ENCODE measurements at regions of chr11 and their contacts with region 1.

Region 1: DNA sequence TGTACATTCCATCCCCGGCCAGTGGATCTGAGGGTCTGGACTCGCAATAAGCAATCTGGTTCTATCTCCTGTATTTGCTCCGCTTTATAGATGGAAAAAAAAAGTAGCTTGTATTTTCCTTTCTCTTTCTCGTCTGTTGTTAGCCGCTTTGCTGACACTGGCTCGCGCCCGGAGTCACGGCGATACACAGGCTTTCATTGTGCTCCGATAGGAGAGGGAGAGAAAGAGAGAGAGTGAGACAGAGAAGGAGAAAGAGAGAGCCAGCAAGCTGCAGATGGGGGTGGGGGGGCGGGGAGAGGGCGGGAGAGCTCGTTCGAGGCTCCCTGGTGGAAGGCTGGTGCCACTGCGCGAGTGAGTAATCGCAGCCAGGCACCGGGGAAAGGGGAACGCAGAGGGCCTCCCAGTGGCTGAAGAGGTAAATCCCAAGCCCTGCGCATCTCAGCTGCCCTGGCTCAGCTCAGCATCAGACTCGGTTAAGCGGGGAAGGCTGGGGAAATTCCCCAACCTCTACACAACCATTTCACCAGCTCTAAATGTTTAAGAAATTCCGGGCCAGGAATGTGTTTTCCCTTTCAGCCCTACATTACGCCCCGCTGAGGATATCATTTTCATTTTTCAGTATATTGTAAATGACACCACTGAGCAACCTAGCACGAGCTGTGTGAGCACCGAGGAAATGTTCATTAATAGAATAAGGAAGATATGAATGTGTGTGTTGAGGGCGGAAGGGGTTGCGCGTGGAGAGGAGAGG is at the start of gene MAML2:
- DNase-seq: peak; percentile 97
- H3K4me3 ChIP-seq: peak within 1 kb of the TSS; percentile 52 to 68 (median 62)
- H3K27ac ChIP-seq: peak within 1 kb of the TSS; percentile 80 to 90 (median 82)
- H3K4me1 ChIP-seq: peaks cover 0 to 46% (median 43%) of the 10 kb centered on the region in 4 donors
- H3K27me3 ChIP-seq: no peaks in the 10 kb centered on the region
- CTCF ChIP-seq: peak; percentile 78 to 98 (median 84)
- EP300 ChIP-seq: no peak
- POLR2A ChIP-seq: no peak
- total RNA-seq, gene MAML2: 11.8 to 20.7 (median 17.9) TPM

Region 2: GRCh38 chr11:95835768-95836488 is 507.2 kb before region 1 on chr11:
- intact Hi-C with region 1: loop called (anchors 10 kb)
- DNase-seq: peak; percentile 80
- H3K4me3 ChIP-seq: no peak overlapping the region
- H3K27ac ChIP-seq: peak overlapping the region in 2 of 4 donors; percentile 33 to 35
- H3K4me1 ChIP-seq: peaks cover 0 to 8% (median 0%) of the 10 kb centered on the region in 4 donors
- H3K27me3 ChIP-seq: no peaks in the 10 kb centered on the region
- CTCF ChIP-seq: peak; percentile 62 to 81 (median 79)
- EP300 ChIP-seq: no peak
- POLR2A ChIP-seq: no peak

Region 3: GRCh38 chr11:95923728-95924413 is 419.3 kb before region 1 on chr11 and contains the start of gene MTMR2:
- intact Hi-C with region 1: loop called (anchors 5 kb)
- DNase-seq: peak; percentile 87
- H3K4me3 ChIP-seq: peak within 1 kb of the TSS; percentile 65 to 78 (median 70)
- H3K27ac ChIP-seq: peak within 1 kb of the TSS; percentile 89 to 96 (median 91)
- H3K4me1 ChIP-seq: peaks cover 0 to 24% (median 16%) of the 10 kb centered on the region in 4 donors
- H3K27me3 ChIP-seq: no peaks in the 10 kb centered on the region
- CTCF ChIP-seq: no peak
- EP300 ChIP-seq: no peak
- POLR2A ChIP-seq: peak; percentile 64 to 72
- total RNA-seq, gene MTMR2: 17.6 to 33.7 (median 24.0) TPM

Region 4: GRCh38 chr11:96054870-96055705 is 288.0 kb before region 1 on chr11:
- intact Hi-C with region 1: loop called (anchors 1 kb)
- DNase-seq: no peak
- H3K4me3 ChIP-seq: no peak overlapping the region
- H3K27ac ChIP-seq: peak overlapping the region in 1 of 4 donors; percentile 10
- H3K4me1 ChIP-seq: peaks cover 0 to 32% (median 17%) of the 10 kb centered on the region in 4 donors
- H3K27me3 ChIP-seq: no peaks in the 10 kb centered on the region
- CTCF ChIP-seq: peak; percentile 30 to 61 (median 54)
- EP300 ChIP-seq: no peak
- POLR2A ChIP-seq: no peak

Region 5: DNA sequence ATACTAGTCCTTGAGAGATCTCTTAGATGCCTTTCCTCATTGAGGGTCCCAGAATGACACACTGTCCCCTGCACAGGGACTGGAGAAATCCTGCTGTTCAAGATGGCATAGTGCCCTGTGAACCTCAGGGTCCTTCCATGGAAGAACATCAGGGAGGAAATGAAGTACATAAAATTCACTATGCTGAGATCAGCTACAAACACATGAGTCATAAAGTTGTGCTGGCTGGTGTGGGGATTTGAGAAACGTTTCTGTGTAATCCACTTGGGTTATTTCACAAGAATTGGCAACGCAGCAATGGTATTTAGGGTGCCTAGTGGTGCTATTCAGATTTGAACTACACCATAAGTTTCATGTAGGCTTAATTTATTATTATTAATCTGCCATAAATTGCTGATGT is 174.5 kb before region 1 on chr11:
- intact Hi-C with region 1: no loop called
- DNase-seq: peak; percentile 82
- H3K4me3 ChIP-seq: no peak overlapping the region
- H3K27ac ChIP-seq: peak overlapping the region in 3 of 4 donors; percentile 25 to 48 (median 30)
- H3K4me1 ChIP-seq: peaks cover 0 to 19% (median 3%) of the 10 kb centered on the region in 4 donors
- H3K27me3 ChIP-seq: no peaks in the 10 kb centered on the region
- CTCF ChIP-seq: no peak
- EP300 ChIP-seq: peak in 1 of 4 donors; percentile 22
- POLR2A ChIP-seq: no peak

Region 6: DNA sequence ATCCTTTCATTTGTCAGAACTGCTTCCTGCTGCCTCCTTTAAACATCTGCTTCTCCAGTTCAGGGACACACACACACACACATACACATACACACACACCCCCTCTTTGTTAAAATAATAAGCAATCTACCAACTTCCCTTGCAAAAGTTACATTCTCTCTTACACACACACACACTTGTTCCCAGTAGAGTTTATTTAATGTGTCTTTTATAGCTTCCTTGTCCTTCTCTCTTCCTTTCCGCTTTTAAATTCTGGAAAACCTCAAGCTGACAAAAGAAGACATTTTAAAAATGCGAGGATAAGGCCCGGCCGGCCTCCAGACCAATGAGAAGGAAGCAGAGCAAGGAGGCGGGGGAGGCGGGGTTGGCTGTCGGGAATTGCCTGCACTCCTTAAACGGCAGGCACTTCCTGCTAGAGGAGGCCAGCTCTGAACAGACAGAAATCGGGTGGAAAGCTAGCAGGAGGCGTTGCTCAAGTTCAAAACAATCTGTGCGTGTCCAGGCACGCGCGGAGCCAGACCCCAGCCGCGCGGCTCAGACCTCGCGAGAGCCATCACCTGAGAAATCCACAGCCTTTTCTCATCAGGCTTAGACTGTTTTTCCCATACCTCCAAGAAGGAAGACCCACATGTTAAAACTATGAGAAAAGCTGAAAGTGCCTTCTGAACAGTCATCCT is 100.0 kb before region 1 on chr11:
- intact Hi-C with region 1: loop called (anchors 2 kb)
- DNase-seq: peak; percentile 98
- H3K4me3 ChIP-seq: peak overlapping the region; percentile 24 to 49 (median 39)
- H3K27ac ChIP-seq: peak overlapping the region; percentile 68 to 87 (median 86)
- H3K4me1 ChIP-seq: peaks cover 0 to 32% (median 27%) of the 10 kb centered on the region in 4 donors
- H3K27me3 ChIP-seq: no peaks in the 10 kb centered on the region
- CTCF ChIP-seq: no peak
- EP300 ChIP-seq: peak in 2 of 4 donors; percentile 23 to 68
- POLR2A ChIP-seq: no peak

Region 7: DNA sequence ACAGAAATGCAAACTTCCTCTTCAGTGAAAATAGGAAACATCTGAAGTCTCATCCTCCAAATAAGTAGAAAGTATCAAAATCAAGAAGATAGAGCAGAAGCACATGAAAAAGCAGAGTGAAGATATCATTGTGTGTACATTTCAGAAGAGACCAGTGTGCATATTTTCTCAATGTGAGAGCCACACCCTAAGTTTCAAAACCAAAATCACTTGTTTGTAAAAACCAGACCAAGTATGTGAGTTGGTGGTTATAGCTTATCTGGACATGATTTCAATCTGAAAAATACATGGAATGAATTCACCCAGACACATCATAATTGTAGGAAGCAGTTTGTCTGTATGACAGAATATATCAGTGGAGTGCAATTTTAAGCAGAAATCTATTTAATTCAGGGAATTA is 582.7 kb after region 1 on chr11:
- intact Hi-C with region 1: no loop called
- DNase-seq: no peak
- H3K4me3 ChIP-seq: no peak overlapping the region
- H3K27ac ChIP-seq: no peak overlapping the region
- H3K4me1 ChIP-seq: no peaks in the 10 kb centered on the region
- H3K27me3 ChIP-seq: no peaks in the 10 kb centered on the region
- CTCF ChIP-seq: no peak
- EP300 ChIP-seq: no peak
- POLR2A ChIP-seq: no peak